ENCODE measurements at regions of chr15 and their contacts with region 1.

Region 1: GRCh38 chr15:65400760-65401610 is 21.8 kb downstream of the IGDCC4 start:
- DNase-seq: peak; percentile 37 to 61
- ATAC-seq: peak; percentile 60 to 80 (median 73)
- H3K4me3 ChIP-seq: no peak overlapping the region
- H3K4me3 Mint-ChIP-seq: no peak overlapping the region
- H3K27ac ChIP-seq: no peak overlapping the region
- H3K27ac Mint-ChIP-seq: no peak overlapping the region
- H3K4me1 ChIP-seq: no peaks in the 10 kb centered on the region
- H3K4me1 Mint-ChIP-seq: peaks cover 0 to 11% of the 10 kb centered on the region in 2 donors
- H3K27me3 ChIP-seq: peaks cover 10% of the 10 kb centered on the region
- H3K27me3 Mint-ChIP-seq: peaks cover 39 to 41% of the 10 kb centered on the region in 2 donors
- CTCF ChIP-seq: peak; percentile 56

Region 2: DNA sequence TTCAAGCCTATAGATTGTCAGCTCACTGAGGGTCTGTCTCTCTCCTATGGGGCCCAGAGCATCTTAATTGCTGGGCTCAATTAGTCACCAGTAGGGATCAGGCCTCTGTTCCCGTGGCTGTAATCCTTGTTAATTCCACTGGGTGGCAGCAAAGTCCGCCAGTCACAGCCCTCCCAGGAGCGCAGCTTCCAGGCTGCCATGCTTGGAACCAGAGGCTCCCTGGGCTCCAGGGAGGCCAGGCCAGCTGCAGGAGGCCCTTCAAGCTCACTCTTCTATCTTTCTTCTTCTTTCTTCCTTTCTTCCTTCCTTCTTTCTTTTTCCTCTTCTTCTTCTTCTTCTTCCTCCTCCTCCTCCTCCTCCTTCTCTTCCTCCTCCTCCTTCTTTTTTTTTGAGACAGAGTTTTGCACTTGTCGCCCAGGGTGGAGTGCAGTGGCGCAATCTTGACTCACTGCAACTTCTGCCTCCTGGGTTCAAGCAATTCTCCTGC is 82.1 kb before region 1 on chr15:
- intact Hi-C with region 1: loop called (anchors 5 kb)
- DNase-seq: peak; percentile 71 to 86
- ATAC-seq: peak; percentile 93 to 100 (median 99)
- H3K4me3 ChIP-seq: no peak overlapping the region
- H3K4me3 Mint-ChIP-seq: no peak overlapping the region
- H3K27ac ChIP-seq: no peak overlapping the region
- H3K27ac Mint-ChIP-seq: no peak overlapping the region
- H3K4me1 ChIP-seq: no peaks in the 10 kb centered on the region
- H3K4me1 Mint-ChIP-seq: peaks cover 5% of the 10 kb centered on the region in 2 donors
- H3K27me3 ChIP-seq: peaks cover 5% of the 10 kb centered on the region
- H3K27me3 Mint-ChIP-seq: peaks cover 0 to 8% of the 10 kb centered on the region in 2 donors
- CTCF ChIP-seq: peak; percentile 93

Measured in natural killer cell (primary cell).